ENCODE measurements at regions of chr3 and their contacts with region 1.

Region 1: GRCh38 chr3:170689893-170690660 is 104.2 kb upstream of the SLC7A14 start:
- DNase-seq: peak; percentile 77
- ATAC-seq: peak; percentile 94

Region 2: DNA sequence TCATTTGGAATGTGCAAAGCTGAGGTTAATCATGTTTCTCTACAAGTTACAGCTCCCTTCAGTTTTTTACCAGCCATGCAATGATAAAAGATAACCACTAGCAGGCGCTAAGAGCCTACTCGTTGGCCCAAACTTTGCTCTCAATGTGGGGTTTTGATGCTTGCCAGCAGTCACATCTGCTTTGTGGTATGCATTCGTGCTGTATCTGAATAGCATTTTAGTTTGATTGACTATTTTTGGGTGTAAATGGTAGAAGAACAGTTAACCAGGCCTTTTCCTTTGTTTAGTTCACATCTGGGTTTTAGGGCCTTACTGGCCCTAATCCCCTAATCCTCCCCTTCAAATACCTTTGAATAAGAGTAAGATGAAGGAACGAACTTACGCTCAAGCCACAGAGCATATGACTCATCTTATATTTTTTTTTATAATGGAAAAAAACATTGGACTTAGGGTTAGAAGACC is 275.8 kb before region 1 on chr3:
- intact Hi-C with region 1: loop called (anchors 10 kb)
- DNase-seq: no peak
- ATAC-seq: peak; percentile 81

Region 3: DNA sequence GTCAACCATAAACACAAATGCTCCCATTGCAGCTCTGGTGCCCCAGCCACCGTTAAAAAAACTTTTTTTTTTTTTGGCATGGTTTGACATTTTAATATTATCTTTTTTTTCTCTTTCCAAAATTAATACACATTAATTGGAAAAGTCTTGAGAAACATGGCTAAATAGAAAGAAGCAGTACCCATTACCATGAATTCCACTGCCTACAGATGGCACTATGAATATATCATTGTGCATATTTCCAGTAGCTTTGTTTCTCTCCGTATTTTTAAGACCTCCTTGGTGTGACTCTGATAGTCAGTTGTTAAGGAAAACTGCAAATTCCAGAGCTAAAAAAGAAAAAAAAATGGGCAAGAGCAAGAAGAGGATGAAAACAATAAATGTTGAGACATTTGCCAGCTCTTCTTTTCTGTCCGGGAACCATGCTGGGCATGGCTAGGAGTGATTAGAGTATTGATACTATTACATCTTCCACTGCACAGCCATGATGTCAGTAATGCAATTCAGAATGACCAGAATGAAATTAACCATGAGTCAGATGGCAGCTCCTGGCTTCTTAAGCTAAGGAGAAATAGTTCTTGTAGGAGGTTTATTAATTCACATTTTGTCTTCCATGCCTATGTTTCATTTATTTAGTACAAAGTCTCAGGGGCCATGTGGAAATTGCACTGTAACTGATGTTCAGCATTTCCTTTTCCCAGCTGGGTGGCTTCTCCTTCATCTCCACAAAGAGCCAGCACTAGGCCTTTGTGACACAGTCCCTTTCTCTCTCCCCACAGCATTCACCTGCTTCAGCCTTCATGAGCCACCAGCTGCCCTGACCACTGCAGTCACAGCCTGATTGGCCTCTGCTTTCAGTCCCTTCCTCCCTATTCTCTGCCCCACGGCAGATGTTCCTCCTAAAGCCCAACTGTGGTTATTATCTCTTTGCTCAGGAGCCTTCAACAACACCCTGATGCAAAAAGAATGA is 136.0 kb before region 1 on chr3:
- intact Hi-C with region 1: loop called (anchors 5 kb)
- DNase-seq: no peak
- ATAC-seq: no peak